MCF 10A (cell line): ENCODE measurements at regions of chr17 and their contacts with region 1.

Region 1: DNA sequence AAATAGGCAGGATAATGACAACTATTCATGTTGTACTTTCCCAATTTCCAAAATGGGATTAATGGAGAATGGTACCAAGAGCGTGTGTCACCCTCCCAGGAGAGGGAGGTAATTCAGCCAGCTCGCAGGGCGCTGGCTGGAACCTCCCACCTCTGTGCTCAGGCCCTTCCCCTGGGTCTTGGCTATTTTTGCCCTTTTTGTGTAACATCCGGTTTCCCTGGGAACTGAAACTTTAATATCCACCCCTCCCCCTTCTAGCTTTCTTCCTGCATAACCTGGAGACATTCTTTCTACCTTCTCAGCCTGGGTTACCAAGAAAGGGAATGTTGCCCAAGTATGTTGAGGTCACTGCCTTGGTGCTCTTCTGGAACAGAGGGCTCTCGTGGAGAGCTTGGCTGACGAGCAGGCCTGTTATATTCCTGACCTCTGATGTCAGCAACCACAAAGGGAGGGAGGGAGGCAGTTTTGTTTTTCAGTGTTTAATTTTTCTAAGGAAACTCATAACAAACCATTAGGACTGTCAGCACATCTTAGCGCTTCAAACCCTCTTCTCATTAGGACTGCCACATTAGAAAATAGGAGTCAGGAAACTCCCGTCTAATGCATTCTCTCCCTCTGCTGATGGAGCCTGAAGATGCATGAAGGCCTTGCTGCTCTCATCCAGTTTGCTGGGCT is 25.6 kb downstream of the ITGB3 start:
- DNase-seq: peak; percentile 98
- H3K4me3 Mint-ChIP-seq: peak overlapping the region; percentile 38
- H3K27ac Mint-ChIP-seq: peak overlapping the region; percentile 94
- H3K4me1 Mint-ChIP-seq: peaks cover 45% of the 10 kb centered on the region
- H3K27me3 Mint-ChIP-seq: no peaks in the 10 kb centered on the region
- CTCF ChIP-seq: no peak

Region 2: GRCh38 chr17:47087093-47087492 is 192.1 kb before region 1 on chr17:
- CTCF ChIA-PET with region 1: no interaction called
- POLR2A ChIA-PET with region 1: no interaction called
- intact Hi-C with region 1: no loop called
- DNase-seq: no peak
- H3K4me3 Mint-ChIP-seq: no peak overlapping the region
- H3K27ac Mint-ChIP-seq: no peak overlapping the region
- H3K4me1 Mint-ChIP-seq: peaks cover 8% of the 10 kb centered on the region
- H3K27me3 Mint-ChIP-seq: no peaks in the 10 kb centered on the region
- CTCF ChIP-seq: no peak

Region 3: DNA sequence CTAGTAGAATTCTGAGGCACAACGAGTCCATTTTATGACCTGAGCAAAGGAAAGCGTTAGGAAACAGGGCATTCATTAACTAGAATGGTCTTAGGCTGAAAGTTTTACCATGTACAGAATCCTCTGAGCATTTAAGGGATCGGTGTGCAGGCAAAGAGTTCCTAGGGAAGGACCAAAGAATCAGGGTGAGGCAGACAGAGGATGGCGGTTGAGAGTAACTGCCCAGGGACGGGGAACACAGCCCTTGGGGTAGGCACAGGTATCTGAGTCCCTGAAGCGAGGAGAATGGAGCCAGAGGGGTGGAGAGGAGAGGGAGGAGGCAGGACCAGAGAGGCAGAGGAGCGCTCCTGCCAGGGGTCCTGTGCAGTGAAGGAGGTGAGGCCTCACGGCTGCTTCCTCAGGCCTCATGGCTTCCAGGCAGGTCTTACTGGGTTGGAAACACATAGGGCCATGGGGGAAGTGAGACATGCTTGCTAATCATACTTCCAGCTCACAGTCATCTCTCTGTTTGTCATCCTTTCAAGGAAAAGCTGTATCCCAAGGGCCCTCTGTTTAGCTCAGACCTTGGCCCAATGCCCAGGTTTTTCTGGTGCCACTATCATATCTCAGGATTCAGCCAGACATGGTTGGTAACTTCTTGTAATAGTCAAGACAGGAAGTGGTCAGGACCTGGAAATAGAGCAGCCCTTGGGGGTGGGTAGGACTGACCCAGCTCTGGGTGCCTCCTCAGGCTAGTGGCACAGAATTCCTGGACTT is 39.4 kb before region 1 on chr17:
- CTCF ChIA-PET with region 1: no interaction called
- POLR2A ChIA-PET with region 1: no interaction called
- intact Hi-C with region 1: loop called (anchors 5 kb)
- DNase-seq: peak; percentile 99
- H3K4me3 Mint-ChIP-seq: no peak overlapping the region
- H3K27ac Mint-ChIP-seq: peak overlapping the region; percentile 75
- H3K4me1 Mint-ChIP-seq: peaks cover 17% of the 10 kb centered on the region
- H3K27me3 Mint-ChIP-seq: no peaks in the 10 kb centered on the region
- CTCF ChIP-seq: no peak

Region 4: GRCh38 chr17:47305302-47305923 is 26.2 kb after region 1 on chr17:
- CTCF ChIA-PET with region 1: interaction called, 3 read pairs
- POLR2A ChIA-PET with region 1: interaction called, 3 read pairs
- intact Hi-C with region 1: loop called (anchors 1 kb)
- DNase-seq: peak; percentile 89
- H3K4me3 Mint-ChIP-seq: no peak overlapping the region
- H3K27ac Mint-ChIP-seq: peak overlapping the region; percentile 29
- H3K4me1 Mint-ChIP-seq: peaks cover 21% of the 10 kb centered on the region
- H3K27me3 Mint-ChIP-seq: no peaks in the 10 kb centered on the region
- CTCF ChIP-seq: no peak

Region 5: GRCh38 chr17:47404006-47404405 is 124.8 kb after region 1 on chr17:
- CTCF ChIA-PET with region 1: no interaction called
- POLR2A ChIA-PET with region 1: no interaction called
- intact Hi-C with region 1: no loop called
- DNase-seq: no peak
- H3K4me3 Mint-ChIP-seq: no peak overlapping the region
- H3K27ac Mint-ChIP-seq: no peak overlapping the region
- H3K4me1 Mint-ChIP-seq: no peaks in the 10 kb centered on the region
- H3K27me3 Mint-ChIP-seq: no peaks in the 10 kb centered on the region
- CTCF ChIP-seq: no peak